Activated CD4-positive, alpha-beta T cell treated with anti-CD3 and anti-CD28 coated beads for 36 hours (primary cell): ENCODE measurements at regions of chr22 and their contacts with region 1.

Region 1: DNA sequence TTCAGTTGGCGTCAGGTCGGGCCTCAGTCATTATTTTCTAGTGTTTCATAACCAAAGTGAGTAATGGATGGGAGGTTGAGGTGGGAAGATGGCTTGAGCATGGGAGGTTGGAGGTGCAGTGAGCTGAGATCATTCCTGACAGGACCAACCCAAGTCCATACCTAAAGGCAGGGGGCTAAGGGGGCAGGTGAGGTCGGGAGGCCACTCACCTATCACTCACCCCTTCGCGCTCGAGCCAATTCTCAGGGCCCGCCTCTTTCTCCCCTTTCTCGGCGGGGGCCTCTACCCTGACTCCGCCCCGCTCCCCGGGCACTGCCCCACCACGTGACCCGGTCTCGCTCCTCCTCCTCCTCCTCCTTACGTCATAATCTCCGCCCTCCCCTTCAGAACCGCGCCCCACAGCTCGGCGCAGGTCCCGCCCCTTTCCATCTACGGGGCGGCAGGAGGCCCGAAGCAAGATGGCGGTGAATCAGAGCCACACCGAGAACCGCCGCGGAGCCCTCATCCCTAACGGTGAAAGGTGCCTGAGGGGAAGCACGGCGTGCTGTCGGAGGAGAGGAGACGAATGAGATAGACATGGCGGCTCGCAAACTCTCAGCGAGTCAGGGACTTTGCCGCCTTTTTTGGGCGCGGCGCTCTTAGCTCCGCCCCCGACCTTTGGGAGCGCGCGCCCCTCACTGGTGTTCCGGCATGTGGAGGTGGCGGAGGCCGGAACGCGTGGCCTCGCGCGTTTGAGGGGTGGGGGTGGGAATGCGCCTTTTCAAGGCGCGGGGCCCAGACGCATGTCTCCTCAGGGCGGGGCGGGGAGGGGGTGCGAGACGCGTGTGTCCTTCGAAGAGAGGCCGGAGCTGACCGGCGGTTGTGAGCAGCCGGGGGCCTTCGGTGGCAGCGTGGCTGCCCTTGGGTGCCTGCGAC is at the start of gene WBP2NL:
- DNase-seq: peak; percentile 92
- ATAC-seq: peak; percentile 97
- H3K4me3 Mint-ChIP-seq: peak within 1 kb of the TSS; percentile 77
- H3K27ac Mint-ChIP-seq: peak within 1 kb of the TSS; percentile 97
- H3K4me1 Mint-ChIP-seq: peaks cover 20% of the 10 kb centered on the region
- H3K27me3 Mint-ChIP-seq: no peaks in the 10 kb centered on the region
- total RNA-seq, gene WBP2NL: 0.30 to 0.54 TPM

Region 2: GRCh38 chr22:41902932-41903421 is 95.6 kb before region 1 on chr22:
- CTCF ChIA-PET with region 1: no interaction called
- POLR2A ChIA-PET with region 1: no interaction called
- intact Hi-C with region 1: no loop called
- DNase-seq: no peak
- ATAC-seq: no peak
- H3K4me3 Mint-ChIP-seq: no peak overlapping the region
- H3K27ac Mint-ChIP-seq: no peak overlapping the region
- H3K4me1 Mint-ChIP-seq: peaks cover 5% of the 10 kb centered on the region
- H3K27me3 Mint-ChIP-seq: no peaks in the 10 kb centered on the region

Region 3: GRCh38 chr22:42033263-42034181 is 34.9 kb after region 1 on chr22:
- CTCF ChIA-PET with region 1: no interaction called
- POLR2A ChIA-PET with region 1: no interaction called
- intact Hi-C with region 1: loop called in 1 of 2 experiments (anchors 1 kb)
- DNase-seq: peak; percentile 29
- ATAC-seq: no peak
- H3K4me3 Mint-ChIP-seq: no peak overlapping the region
- H3K27ac Mint-ChIP-seq: no peak overlapping the region
- H3K4me1 Mint-ChIP-seq: peaks cover 19% of the 10 kb centered on the region
- H3K27me3 Mint-ChIP-seq: no peaks in the 10 kb centered on the region

Region 4: GRCh38 chr22:42500161-42500835 is 501.7 kb after region 1 on chr22:
- CTCF ChIA-PET with region 1: no interaction called
- POLR2A ChIA-PET with region 1: no interaction called
- intact Hi-C with region 1: loop called in 1 of 2 experiments (anchors 2 kb)
- DNase-seq: peak; percentile 91
- ATAC-seq: peak; percentile 98
- H3K4me3 Mint-ChIP-seq: peak overlapping the region; percentile 38
- H3K27ac Mint-ChIP-seq: no peak overlapping the region
- H3K4me1 Mint-ChIP-seq: peaks cover 11% of the 10 kb centered on the region
- H3K27me3 Mint-ChIP-seq: no peaks in the 10 kb centered on the region